ENCODE measurements at regions of chr4 and their contacts with region 1.

Region 1: DNA sequence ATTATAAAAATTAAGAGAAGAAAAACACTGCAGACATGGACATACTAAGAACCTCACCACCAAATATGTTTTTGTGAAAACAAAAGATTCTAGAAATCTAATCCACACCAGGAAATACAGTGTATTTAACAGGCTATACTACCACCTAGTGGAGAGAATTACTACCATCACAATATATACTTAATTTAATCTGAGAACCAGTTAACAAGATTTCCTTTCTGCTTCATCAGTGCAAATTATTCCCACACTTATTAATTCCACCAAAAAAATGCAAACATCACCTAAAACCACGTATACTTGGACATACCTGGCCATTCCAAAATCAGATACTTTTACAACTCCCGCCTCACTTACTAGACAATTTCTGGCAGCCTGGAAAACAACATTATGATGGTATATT is 7.0 kb upstream of the TXK start:
- H3K4me3 ChIP-seq: no peak overlapping the region
- H3K27ac ChIP-seq: no peak overlapping the region
- H3K4me1 ChIP-seq: no peaks in the 10 kb centered on the region
- CTCF ChIP-seq: 0 out of 2 replicates have a peak, but pooled peaks have one; percentile 25

Region 2: GRCh38 chr4:48127682-48128394 is 13.2 kb before region 1 on chr4:
- CTCF ChIA-PET with region 1: interaction called, 19 read pairs
- POLR2A ChIA-PET with region 1: no interaction called
- H3K4me3 ChIP-seq: no peak overlapping the region
- H3K27ac ChIP-seq: no peak overlapping the region
- H3K4me1 ChIP-seq: no peaks in the 10 kb centered on the region
- CTCF ChIP-seq: peak; percentile 49

Region 3: GRCh38 chr4:48290146-48290772 is 149.2 kb after region 1 on chr4:
- CTCF ChIA-PET with region 1: no interaction called
- POLR2A ChIA-PET with region 1: no interaction called
- H3K4me3 ChIP-seq: no peak overlapping the region
- H3K27ac ChIP-seq: no peak overlapping the region
- H3K4me1 ChIP-seq: no peaks in the 10 kb centered on the region
- CTCF ChIP-seq: 0 out of 2 replicates have a peak, but pooled peaks have one; percentile 14

Measured in HEK293 (cell line).